Stomach (tissue), 19 donors: ENCODE measurements at regions of chr12 and their contacts with region 1.

Region 1: DNA sequence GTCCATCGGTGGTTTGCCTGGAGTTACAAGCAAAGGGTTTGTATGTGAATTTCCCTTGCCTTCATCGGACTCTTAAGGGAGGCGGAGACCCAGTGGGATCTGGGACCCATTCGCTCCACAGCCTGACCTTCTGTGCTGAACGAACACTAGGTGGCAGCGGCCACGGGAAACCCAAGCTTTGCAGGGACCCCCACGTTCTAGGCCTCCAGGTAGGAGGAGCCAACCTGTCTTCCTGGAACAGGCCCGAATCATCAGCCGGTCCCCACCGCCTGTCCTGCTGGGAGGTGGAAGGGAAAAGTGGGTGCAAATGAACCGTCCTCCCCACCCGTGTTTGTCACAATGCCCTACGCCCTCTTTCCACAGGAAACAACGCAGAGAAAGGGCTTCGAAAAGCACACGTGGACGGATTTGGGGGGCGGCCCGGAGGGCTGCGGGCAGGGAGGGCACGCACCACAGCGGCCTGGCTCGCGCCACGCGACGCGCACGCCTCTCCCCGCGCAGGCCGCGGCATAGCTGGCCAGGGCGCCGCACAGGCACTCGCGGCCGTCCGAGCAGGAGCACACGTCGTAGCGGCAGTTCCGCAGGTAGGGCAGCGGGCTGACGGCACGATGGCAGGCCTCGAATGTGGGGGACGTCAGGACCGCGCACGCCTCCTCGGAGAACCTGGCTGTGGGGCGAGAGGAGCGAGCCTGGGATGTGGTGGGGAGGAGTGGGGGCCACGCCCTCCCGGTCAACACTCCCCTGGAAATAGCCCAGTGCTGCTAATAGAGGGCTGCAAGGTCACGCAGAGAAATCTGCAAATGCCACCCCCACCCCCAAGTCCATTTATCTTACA is 67.8 kb downstream of the VWF start:
- DNase-seq: peak in 1 of 2 donors; percentile 71
- H3K4me3 ChIP-seq: peak overlapping the region in 3 of 4 donors; percentile 5 to 36 (median 19)
- H3K27ac ChIP-seq: no peak overlapping the region
- H3K4me1 ChIP-seq: peaks cover 7 to 10% (median 8%) of the 10 kb centered on the region in 4 donors
- H3K27me3 ChIP-seq: peaks cover 0 to 36% (median 10%) of the 10 kb centered on the region in 3 donors
- CTCF ChIP-seq: no peak
- EP300 ChIP-seq: no peak
- POLR2A ChIP-seq: no peak

Region 2: GRCh38 chr12:6272300-6273204 is 215.9 kb after region 1 on chr12:
- intact Hi-C with region 1: loop called (anchors 5 kb)
- DNase-seq: peak; percentile 40 to 75
- H3K4me3 ChIP-seq: no peak overlapping the region
- H3K27ac ChIP-seq: peak overlapping the region in 3 of 5 donors; percentile 7 to 29 (median 10)
- H3K4me1 ChIP-seq: peaks cover 6 to 43% (median 27%) of the 10 kb centered on the region in 4 donors
- H3K27me3 ChIP-seq: no peaks in the 10 kb centered on the region
- CTCF ChIP-seq: no peak
- EP300 ChIP-seq: no peak
- POLR2A ChIP-seq: no peak